ENCODE measurements at regions of chr2 and their contacts with region 1.

Region 1: GRCh38 chr2:64644177-64645004 is 9.3 kb downstream of the SERTAD2 start:
- DNase-seq: peak; percentile 53
- H3K4me3 ChIP-seq: peak overlapping the region; percentile 25 to 33
- H3K27ac ChIP-seq: peak overlapping the region; percentile 90
- H3K4me1 ChIP-seq: peaks cover 13% of the 10 kb centered on the region
- H3K27me3 ChIP-seq: no peaks in the 10 kb centered on the region
- CTCF ChIP-seq: no peak
- POLR2A ChIP-seq: peak; percentile 44

Region 2: DNA sequence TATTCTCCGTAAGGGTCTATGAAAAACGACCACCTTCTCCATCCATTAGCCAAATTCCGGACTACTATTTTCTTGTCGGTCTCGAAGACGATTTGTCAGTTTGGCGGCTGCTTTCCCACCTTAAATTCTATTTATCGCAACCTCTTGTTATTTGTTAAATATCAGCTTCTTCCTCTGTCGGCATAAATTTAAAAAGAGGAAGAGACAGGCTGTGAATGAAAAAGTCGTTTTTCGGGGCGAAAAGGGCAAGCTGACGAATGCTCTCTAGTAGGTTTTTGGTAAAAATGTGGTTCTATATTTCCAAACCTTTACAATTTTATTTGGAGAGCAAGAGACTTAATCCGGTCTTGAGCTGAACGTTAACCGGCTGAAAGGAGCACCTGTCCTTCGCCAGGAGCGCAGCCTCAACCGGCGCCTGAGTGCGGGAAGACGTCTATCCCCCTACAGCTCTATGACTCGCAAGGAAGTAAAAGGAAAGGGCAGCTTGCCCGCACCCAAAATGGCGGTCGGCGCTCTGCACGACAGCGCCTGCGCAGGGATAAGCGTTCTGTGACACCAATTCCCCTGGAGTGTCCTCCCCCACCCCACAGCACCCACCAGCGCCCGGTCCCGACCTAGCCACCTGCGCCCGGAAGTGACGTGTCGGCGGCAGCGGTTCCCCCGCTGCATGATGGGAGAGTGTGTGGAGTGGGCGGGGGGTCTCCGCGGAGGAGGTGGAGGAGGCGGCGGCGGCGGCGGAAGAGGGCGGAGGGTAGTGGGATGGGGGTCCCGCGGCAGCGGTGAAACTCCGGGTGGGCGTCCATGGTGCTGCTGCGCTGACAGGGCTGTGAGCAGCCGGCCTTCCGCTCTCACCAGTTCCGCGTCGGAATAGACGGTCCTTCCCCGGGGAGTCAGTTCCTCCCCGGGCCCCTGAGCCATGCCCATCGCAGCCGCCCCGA is 120.5 kb before region 1 on chr2 and contains the start of gene AFTPH:
- intact Hi-C with region 1: loop called (anchors 10 kb)
- DNase-seq: peak; percentile 99
- H3K4me3 ChIP-seq: peak within 1 kb of the TSS; percentile 76 to 94
- H3K27ac ChIP-seq: peak within 1 kb of the TSS; percentile 92 to 95
- H3K4me1 ChIP-seq: no peaks in the 10 kb centered on the region
- H3K27me3 ChIP-seq: no peaks in the 10 kb centered on the region
- CTCF ChIP-seq: peak in 1 of 4 experiments; percentile 36
- POLR2A ChIP-seq: peak; percentile 92
- total RNA-seq, gene AFTPH: 61.3 to 68.1 TPM

Region 3: DNA sequence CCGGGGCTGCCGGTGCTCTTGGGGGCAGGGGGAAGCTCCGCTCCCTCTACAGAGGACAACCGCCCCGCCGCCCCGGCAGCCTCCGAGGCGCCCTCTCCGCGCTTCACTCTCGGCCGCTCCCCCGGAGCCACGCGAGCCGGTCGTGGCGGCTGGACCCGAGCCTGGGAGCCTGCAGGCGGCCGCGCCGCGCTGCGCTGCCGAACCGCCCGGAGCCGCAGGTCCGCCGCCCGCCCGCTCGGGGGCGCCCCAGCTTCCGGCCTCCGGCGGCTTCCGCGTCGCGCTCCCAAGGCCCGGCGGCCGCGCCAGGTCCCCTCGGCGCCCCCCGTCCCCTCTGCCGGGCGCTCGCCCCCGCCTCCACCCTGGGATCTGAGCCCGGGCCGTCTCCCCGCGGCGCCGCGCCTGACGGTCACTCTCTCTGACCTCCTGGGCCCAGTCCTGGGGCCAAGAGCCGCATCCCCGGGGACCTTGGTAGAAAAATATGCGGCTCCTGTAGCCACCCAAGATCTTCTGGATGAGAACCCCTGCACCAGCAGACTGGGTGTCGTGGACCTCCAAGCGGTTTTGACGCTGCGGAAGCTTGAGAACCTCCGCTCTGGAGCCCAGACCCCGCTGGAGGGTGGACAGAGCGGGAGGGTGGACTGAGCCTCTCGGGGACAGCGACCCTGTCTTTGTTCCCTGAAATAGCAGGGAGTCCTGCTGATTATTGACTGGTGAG is 35.0 kb before region 1 on chr2:
- intact Hi-C with region 1: loop called (anchors 5 kb)
- DNase-seq: no peak
- H3K4me3 ChIP-seq: peak overlapping the region; percentile 35 to 38
- H3K27ac ChIP-seq: peak overlapping the region in 1 of 2 donors; percentile 39
- H3K4me1 ChIP-seq: peaks cover 8% of the 10 kb centered on the region
- H3K27me3 ChIP-seq: no peaks in the 10 kb centered on the region
- CTCF ChIP-seq: peak in 3 of 4 experiments; percentile 4 to 73 (median 28)
- POLR2A ChIP-seq: no peak

Region 4: DNA sequence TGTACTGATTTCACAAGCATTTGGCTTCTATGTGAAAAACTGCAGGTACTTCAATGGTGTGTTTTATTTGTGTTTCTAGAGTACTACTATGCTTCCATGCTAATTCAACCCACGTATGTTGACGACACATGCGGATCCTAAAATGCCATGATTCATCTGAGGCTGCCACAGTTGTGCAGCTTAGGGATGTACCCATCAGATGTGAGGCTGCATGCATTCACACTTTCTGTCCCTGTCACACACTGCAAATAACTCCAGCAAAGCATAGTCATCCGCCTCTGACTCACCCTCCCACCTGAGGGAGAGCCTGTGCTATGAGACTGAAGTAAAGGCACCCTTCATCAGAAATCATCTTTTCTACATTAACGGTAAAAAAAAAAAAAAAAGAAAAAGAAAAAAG is 31.5 kb after region 1 on chr2:
- intact Hi-C with region 1: no loop called
- DNase-seq: no peak
- H3K4me3 ChIP-seq: no peak overlapping the region
- H3K27ac ChIP-seq: no peak overlapping the region
- H3K4me1 ChIP-seq: no peaks in the 10 kb centered on the region
- H3K27me3 ChIP-seq: no peaks in the 10 kb centered on the region
- CTCF ChIP-seq: no peak
- POLR2A ChIP-seq: no peak

Region 5: DNA sequence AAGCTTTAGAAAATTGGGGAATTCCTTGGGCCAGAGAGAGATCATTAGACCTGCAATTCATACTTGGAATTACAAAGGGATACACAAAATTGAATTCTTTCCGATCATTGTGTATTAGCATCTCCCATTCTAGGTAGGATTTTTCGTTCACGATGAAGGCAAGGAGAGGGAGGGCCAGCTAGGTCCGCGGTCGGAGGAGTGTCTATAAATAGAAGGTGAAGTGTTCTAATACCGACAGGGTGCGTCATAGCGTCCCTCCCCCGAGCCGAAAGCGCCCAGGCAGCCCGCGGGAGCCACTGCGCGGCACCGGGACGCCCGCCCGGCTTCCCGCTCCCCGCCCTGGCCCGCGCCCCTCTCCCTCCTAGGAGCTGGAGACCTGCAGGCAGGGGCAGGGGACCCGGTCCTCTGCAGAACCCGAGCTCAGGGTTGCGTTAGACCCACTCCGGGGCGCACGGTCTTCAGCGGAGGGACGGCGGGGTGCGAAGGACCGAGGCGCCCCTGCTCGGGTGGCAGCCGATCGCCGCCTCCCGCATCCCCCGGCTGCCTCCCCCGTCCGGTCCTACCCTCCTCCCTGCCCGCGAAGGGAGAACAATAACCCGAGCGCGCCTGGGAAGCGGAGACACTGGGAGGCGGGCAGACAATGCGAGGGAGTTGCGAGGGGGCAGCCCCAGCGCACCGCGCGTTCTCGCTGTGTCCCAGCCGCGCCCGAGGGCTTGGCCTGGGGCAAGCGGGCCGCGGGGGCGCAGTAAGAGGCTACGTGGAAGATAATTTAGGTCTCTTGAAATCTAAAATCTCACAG is 123.5 kb after region 1 on chr2:
- intact Hi-C with region 1: loop called (anchors 2 kb)
- DNase-seq: peak; percentile 92
- H3K4me3 ChIP-seq: peak overlapping the region; percentile 75 to 77
- H3K27ac ChIP-seq: peak overlapping the region; percentile 93 to 96
- H3K4me1 ChIP-seq: no peaks in the 10 kb centered on the region
- H3K27me3 ChIP-seq: no peaks in the 10 kb centered on the region
- CTCF ChIP-seq: peak in 1 of 4 experiments; percentile 26
- POLR2A ChIP-seq: peak; percentile 80

Region 6: GRCh38 chr2:64865073-64865830 is 220.9 kb after region 1 on chr2:
- intact Hi-C with region 1: loop called (anchors 2 kb)
- DNase-seq: peak; percentile 63
- H3K4me3 ChIP-seq: peak overlapping the region; percentile 44 to 54
- H3K27ac ChIP-seq: peak overlapping the region; percentile 86 to 87
- H3K4me1 ChIP-seq: peaks cover 4% of the 10 kb centered on the region
- H3K27me3 ChIP-seq: no peaks in the 10 kb centered on the region
- CTCF ChIP-seq: peak; percentile 73 to 99 (median 96)
- POLR2A ChIP-seq: no peak